Heart right ventricle (tissue), 16 donors: ENCODE measurements at regions of chr10 and their contacts with region 1.

Region 1: GRCh38 chr10:34815185-34816084 is at the start of gene PARD3:
- DNase-seq: peak; percentile 58 to 77
- ATAC-seq: peak; percentile 68 to 87 (median 78)
- H3K4me3 ChIP-seq: peak within 1 kb of the TSS; percentile 56 to 97 (median 80)
- H3K27ac ChIP-seq: peak within 1 kb of the TSS; percentile 68 to 91 (median 85)
- H3K4me1 ChIP-seq: peaks cover 2 to 46% (median 36%) of the 10 kb centered on the region in 9 donors
- H3K27me3 ChIP-seq: peaks cover 0 to 56% (median 3%) of the 10 kb centered on the region in 7 donors
- CTCF ChIP-seq: no peak
- total RNA-seq, gene PARD3: 28.8 to 41.8 (median 34.2) TPM

Region 2: DNA sequence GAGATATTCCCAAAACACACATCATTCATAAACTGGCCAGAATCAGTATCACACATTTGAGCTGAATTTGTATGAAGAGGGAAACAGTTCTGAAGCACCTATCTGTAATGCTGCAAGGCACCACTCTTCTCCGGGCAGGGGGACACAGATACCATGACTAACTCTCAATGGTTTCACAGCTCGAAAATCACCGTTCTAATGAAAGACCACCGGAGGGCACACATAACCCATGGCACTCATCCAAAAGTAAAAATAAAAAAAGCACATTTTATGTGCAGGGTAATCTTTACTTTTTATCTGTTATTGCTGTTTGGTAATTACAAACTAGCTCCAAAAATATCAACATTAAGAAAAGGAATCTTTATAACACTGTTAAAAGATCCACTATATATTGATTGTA is 137.8 kb before region 1 on chr10:
- intact Hi-C with region 1: loop called in 1 of 10 experiments (anchors 10 kb)
- DNase-seq: no peak
- ATAC-seq: no peak
- H3K4me3 ChIP-seq: no peak overlapping the region
- H3K27ac ChIP-seq: no peak overlapping the region
- H3K4me1 ChIP-seq: peaks cover 0 to 13% (median 8%) of the 10 kb centered on the region in 9 donors
- H3K27me3 ChIP-seq: no peaks in the 10 kb centered on the region
- CTCF ChIP-seq: no peak

Region 3: GRCh38 chr10:34739915-34740314 is 75.5 kb before region 1 on chr10:
- intact Hi-C with region 1: loop called in 1 of 10 experiments (anchors 5 kb)
- DNase-seq: peak; percentile 50 to 51
- ATAC-seq: peak; percentile 46 to 73 (median 65)
- H3K4me3 ChIP-seq: peak overlapping the region in 6 of 10 donors; percentile 2 to 30 (median 14)
- H3K27ac ChIP-seq: peak overlapping the region in 3 of 10 donors; percentile 3 to 47 (median 26)
- H3K4me1 ChIP-seq: peaks cover 8 to 37% (median 27%) of the 10 kb centered on the region in 9 donors
- H3K27me3 ChIP-seq: no peaks in the 10 kb centered on the region
- CTCF ChIP-seq: no peak

Region 4: GRCh38 chr10:34776090-34776690 is 39.2 kb before region 1 on chr10:
- intact Hi-C with region 1: loop called in 1 of 10 experiments (anchors 5 kb)
- DNase-seq: no peak
- ATAC-seq: no peak
- H3K4me3 ChIP-seq: no peak overlapping the region
- H3K27ac ChIP-seq: no peak overlapping the region
- H3K4me1 ChIP-seq: peaks cover 12 to 53% (median 31%) of the 10 kb centered on the region in 9 donors
- H3K27me3 ChIP-seq: no peaks in the 10 kb centered on the region
- CTCF ChIP-seq: no peak